Heart left ventricle (tissue), 16 donors: ENCODE measurements at regions of chr11 and their contacts with region 1.

Region 1: DNA sequence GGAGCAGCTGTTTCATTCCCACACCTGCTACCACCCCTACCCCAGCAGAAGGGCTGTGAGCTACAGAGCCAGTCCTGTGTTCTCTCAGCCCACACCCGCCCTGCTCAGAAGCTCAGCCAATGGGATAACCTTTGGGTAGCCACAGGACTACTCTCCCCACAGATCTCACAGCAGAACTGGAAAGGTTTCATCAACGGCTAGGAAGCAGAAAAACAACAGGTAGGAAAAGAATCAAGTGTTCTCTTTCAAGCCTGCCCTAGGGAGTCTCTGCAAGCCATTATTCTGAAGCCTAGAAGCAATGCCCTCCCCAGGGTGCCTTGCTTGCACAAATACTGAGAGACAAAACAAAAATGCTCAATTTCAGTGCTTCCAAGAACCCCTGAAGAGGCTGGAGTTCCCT is 77.2 kb downstream of the TMPRSS5 start:
- DNase-seq: no peak
- ATAC-seq: no peak
- H3K4me3 ChIP-seq: no peak overlapping the region
- H3K27ac ChIP-seq: no peak overlapping the region
- H3K4me1 ChIP-seq: peaks cover 0 to 4% (median 0%) of the 10 kb centered on the region in 12 donors
- H3K27me3 ChIP-seq: peaks cover 0 to 3% (median 0%) of the 10 kb centered on the region in 9 donors
- CTCF ChIP-seq: no peak
- POLR2A ChIP-seq: no peak

Region 2: GRCh38 chr11:113562981-113563461 is 65.9 kb before region 1 on chr11:
- intact Hi-C with region 1: loop called in 1 of 10 experiments (anchors 10 kb)
- DNase-seq: no peak
- ATAC-seq: no peak
- H3K4me3 ChIP-seq: no peak overlapping the region
- H3K27ac ChIP-seq: no peak overlapping the region
- H3K4me1 ChIP-seq: peaks cover 0 to 4% (median 0%) of the 10 kb centered on the region in 12 donors
- H3K27me3 ChIP-seq: peaks cover 0 to 6% (median 0%) of the 10 kb centered on the region in 9 donors
- CTCF ChIP-seq: no peak
- POLR2A ChIP-seq: no peak